Right ventricle myocardium superior (tissue), 1 donor: ENCODE measurements at regions of chr1 and their contacts with region 1.

Region 1: DNA sequence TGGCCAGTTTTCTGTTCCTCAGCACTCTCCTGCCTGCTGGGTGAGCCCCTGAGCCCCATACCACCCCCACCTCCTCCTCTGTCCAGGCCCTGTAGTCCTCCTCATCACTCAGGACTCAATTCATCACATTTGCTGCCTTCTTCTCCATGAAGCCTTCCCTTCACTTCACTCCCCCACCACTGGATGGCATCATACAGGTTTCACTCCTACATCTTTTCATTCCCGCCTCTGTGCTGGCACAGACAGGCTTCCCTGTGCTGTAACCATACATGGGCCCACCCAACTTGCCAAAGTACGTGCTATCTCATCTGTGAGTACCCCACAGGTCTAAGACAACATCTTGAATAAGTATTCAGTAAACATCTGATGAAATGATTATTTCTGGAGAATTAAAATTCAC is 56.9 kb downstream of the SLC45A1 start:
- DNase-seq: no peak
- ATAC-seq: no peak

Region 2: DNA sequence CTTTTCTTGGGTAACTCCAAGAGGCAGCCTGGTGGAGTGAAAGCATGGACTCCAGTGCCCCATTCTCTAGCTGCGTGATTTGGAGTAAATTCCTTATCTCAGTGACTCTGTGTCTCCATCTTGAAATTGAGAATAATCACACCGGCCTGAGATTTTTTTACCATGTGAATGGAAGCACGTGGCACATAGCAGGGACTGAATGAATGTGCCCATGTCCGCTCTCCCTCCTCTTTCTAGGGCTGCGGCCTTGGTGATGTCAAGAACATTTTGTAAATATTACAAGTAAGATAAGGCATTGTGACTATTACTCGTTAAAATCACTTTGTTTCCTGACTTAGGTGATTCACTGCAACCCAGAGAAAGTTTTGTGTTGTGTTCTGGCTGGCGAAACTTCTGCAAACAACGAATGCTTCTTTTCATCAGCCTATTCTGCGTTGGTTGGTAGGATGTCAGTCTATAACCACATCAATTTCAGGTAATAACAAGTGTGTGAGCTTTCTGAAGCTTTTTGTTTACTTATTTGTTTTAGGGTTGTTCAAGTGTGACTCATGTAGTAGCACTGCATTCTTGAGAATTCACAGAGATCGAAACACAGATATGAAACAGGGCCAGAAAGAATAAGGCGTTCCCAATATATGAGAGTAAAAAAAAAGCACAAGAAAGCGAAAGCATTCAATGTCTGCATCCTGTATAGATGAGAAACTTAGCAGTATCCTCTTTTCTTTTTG is 192.6 kb before region 1 on chr1:
- intact Hi-C with region 1: no loop called
- DNase-seq: no peak
- ATAC-seq: peak; percentile 22

Region 3: DNA sequence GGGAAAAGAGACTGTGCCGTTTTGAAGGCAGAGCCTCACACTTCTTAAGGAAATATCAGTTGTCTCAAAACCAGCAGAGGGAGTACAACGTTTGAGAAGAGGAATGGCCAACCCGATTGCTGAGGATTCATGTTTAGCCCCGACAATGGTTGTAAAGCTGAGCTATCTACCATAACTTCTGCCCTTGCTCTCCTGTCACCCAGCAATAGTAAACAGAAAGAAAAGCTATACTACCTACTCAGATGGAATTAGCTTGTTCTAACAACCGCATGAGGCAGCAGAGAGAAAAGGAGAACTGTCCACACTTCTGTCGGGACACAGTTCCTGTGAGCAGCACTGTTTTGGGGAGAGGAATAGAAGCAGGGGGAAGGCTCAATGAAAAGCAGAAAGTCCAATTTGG is 34.3 kb after region 1 on chr1:
- intact Hi-C with region 1: loop called (anchors 5 kb)
- DNase-seq: no peak
- ATAC-seq: peak; percentile 59

Region 4: DNA sequence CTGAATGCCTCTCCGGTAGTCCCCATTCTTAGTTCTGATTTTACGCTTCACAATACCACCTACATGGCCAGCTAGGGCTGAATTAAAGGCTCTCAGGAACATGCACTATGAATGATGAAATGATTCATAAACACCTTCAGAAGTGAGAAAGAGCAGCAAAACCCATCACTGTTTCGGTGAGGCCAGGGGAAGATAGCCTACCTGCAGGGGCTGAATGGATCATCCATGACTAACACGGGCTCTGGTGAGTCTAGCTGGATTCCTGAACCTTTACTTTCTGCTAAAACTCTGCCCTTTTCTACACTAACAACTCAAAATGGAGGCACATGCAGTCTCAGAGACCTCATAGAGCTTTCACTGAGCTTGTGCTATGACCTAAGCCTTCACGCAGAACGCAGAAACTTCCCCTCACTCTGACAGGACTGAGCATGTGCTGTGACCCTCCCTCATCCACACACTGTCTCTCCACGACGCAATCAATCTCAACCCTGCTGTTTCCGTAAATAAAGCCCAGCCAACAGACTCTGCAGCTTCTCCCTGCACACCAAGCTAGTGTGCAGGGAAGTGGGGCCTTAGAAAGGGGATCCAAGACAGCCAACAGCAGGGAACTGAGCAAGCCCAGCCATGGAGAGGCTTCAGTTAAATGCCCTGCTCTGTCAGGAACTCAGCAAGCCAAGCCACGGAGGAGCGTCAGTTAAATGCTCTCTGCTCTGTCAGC is 150.9 kb after region 1 on chr1:
- intact Hi-C with region 1: loop called (anchors 10 kb)
- DNase-seq: peak; percentile 82
- ATAC-seq: peak; percentile 98